CD8-positive, alpha-beta memory T cell (primary cell): ENCODE measurements at regions of chr19 and their contacts with region 1.

Region 1: GRCh38 chr19:48588670-48589399 is 17.7 kb upstream of the SPACA4 start:
- DNase-seq: peak; percentile 72 to 88 (median 80)
- H3K4me3 ChIP-seq: peak overlapping the region; percentile 52
- H3K4me3 Mint-ChIP-seq: peak overlapping the region; percentile 46 to 81 (median 65)
- H3K27ac ChIP-seq: no peak overlapping the region
- H3K27ac Mint-ChIP-seq: peak overlapping the region in 5 of 8 donors; percentile 11 to 78 (median 48)
- H3K4me1 ChIP-seq: peaks cover 6% of the 10 kb centered on the region
- H3K4me1 Mint-ChIP-seq: peaks cover 10 to 17% (median 15%) of the 10 kb centered on the region in 3 donors
- H3K27me3 ChIP-seq: no peaks in the 10 kb centered on the region
- H3K27me3 Mint-ChIP-seq: peaks cover 2 to 10% of the 10 kb centered on the region in 2 donors

Region 2: GRCh38 chr19:48303367-48303766 is 285.5 kb before region 1 on chr19:
- CTCF ChIA-PET with region 1: no interaction called
- POLR2A ChIA-PET with region 1: no interaction called
- DNase-seq: no peak
- H3K4me3 ChIP-seq: no peak overlapping the region
- H3K4me3 Mint-ChIP-seq: no peak overlapping the region
- H3K27ac ChIP-seq: no peak overlapping the region
- H3K27ac Mint-ChIP-seq: peak overlapping the region in 1 of 8 donors; percentile 14
- H3K4me1 ChIP-seq: no peaks in the 10 kb centered on the region
- H3K4me1 Mint-ChIP-seq: no peaks in the 10 kb centered on the region
- H3K27me3 ChIP-seq: no peaks in the 10 kb centered on the region
- H3K27me3 Mint-ChIP-seq: peaks cover 0 to 7% of the 10 kb centered on the region in 2 donors

Region 3: DNA sequence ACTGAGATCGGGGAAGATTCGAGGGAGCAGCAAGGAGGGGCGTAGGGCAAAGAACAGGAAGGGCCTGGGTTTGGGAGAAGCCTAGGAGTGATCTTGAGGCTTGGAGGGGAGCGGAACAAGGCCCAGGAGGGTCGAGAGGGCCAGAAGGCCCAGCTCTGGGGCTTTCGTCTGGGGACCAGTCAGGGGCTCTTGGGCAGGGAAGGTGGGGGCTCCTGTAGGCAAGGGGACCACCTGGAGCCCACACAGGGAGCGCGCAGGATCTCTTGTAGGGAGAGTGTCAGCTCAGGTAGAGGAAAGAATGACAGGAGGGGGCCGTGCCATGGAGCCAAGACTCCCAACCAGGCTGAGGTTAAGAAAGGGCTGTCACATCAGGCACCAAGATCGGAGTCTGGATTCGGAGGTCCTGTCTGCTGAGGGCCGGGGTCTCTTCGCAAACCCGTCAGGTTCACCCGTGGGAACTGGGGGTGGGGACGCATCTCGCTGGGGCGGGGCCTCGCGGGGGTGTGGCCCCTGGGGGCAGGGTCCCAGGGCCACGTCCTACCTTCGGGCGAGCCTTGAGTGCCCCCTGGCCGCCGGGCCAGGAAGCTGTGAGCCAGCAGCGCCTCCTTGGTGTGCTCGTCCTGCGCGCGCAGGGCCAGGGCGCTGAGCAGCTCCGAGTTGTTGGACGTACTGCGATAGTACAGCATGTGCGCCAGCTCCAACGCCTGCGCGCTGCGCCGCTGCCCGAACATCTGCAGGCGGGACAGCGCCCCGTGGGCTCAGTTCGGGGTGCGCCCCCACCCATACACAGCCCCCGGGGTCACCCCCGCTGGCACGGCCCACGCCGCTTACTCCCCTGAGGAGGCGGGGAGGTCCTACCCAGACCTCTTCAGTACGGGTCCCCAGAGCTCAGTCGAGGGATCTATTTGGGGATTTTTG is 255.1 kb before region 1 on chr19:
- CTCF ChIA-PET with region 1: interaction called, 11 read pairs
- POLR2A ChIA-PET with region 1: no interaction called
- DNase-seq: peak; percentile 89 to 95 (median 91)
- H3K4me3 ChIP-seq: peak overlapping the region; percentile 95
- H3K4me3 Mint-ChIP-seq: peak overlapping the region; percentile 88 to 99 (median 97)
- H3K27ac ChIP-seq: peak overlapping the region; percentile 88
- H3K27ac Mint-ChIP-seq: peak overlapping the region; percentile 93 to 98 (median 96)
- H3K4me1 ChIP-seq: peaks cover 43% of the 10 kb centered on the region
- H3K4me1 Mint-ChIP-seq: peaks cover 43 to 53% (median 49%) of the 10 kb centered on the region in 3 donors
- H3K27me3 ChIP-seq: no peaks in the 10 kb centered on the region
- H3K27me3 Mint-ChIP-seq: no peaks in the 10 kb centered on the region

Region 4: DNA sequence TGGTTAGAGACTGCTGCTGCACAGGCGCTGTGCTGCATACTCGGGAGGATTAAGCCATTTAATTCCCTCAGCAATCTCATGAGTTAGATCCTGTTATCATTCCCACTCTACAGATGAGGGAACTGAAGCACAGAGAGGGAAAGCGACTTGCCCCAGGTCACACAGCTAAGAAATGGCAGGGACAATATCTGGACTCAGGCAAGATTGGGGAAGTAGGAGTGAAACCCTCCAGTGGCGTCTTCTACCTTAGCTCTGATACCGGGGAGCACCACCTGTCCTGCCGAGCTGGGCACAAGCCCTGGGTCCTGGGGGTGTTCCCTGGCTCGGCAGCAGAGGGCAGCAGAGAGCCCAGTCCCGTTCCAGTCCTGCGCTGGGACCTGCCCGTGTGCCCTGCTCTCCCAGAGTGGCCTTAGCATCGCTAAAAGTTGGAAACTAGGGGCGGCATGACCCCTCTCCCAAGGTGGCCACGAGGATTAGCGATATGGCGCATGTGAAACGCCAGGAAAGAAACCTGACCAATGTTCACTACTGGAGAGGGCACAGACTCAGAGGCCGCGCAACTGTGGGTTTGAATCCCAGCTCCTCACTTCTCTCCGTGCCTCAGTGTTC is 99.1 kb before region 1 on chr19:
- CTCF ChIA-PET with region 1: interaction called, 37 read pairs
- POLR2A ChIA-PET with region 1: interaction called, 7 read pairs
- DNase-seq: peak; percentile 69 to 80 (median 75)
- H3K4me3 ChIP-seq: no peak overlapping the region
- H3K4me3 Mint-ChIP-seq: peak overlapping the region in 3 of 7 donors; percentile 15 to 40 (median 24)
- H3K27ac ChIP-seq: no peak overlapping the region
- H3K27ac Mint-ChIP-seq: peak overlapping the region in 1 of 8 donors; percentile 87
- H3K4me1 ChIP-seq: peaks cover 37% of the 10 kb centered on the region
- H3K4me1 Mint-ChIP-seq: peaks cover 20 to 39% (median 30%) of the 10 kb centered on the region in 3 donors
- H3K27me3 ChIP-seq: peaks cover 4% of the 10 kb centered on the region
- H3K27me3 Mint-ChIP-seq: peaks cover 17 to 19% of the 10 kb centered on the region in 2 donors

Region 5: DNA sequence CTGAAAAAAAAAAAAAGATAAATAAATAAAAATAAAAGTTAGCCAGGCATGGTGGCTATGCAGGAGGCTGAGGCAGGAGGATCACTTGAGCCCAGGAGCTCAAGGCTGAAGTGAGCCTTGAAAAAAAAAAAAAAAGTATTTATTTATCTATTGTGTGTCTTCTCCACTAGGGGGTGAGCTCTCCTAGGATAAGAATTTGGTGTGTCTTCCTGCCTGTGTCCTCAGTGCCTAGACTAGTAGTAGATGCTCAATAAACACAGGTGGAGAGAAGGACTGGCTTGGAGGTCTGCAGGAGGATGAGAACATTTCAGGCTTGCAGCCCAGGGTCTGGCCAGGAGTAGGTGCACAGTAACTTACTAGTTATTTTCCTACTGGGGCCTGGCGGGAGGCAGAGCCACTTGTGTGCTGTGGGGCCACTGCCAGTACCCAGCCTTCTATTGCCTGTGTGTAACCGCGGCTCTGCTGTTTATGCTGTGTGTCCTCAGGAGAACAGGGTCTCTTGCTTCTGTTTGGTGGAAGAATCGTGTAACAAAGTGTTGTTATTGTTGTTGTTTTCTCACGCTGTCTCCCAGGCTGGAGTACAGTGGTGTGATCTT is 82.6 kb before region 1 on chr19:
- CTCF ChIA-PET with region 1: interaction called, 152 read pairs
- POLR2A ChIA-PET with region 1: no interaction called
- DNase-seq: peak in 2 of 5 donors; percentile 60
- H3K4me3 ChIP-seq: no peak overlapping the region
- H3K4me3 Mint-ChIP-seq: peak overlapping the region in 2 of 7 donors; percentile 15 to 64
- H3K27ac ChIP-seq: no peak overlapping the region
- H3K27ac Mint-ChIP-seq: peak overlapping the region in 2 of 8 donors; percentile 26 to 63
- H3K4me1 ChIP-seq: peaks cover 14% of the 10 kb centered on the region
- H3K4me1 Mint-ChIP-seq: peaks cover 13 to 24% (median 14%) of the 10 kb centered on the region in 3 donors
- H3K27me3 ChIP-seq: no peaks in the 10 kb centered on the region
- H3K27me3 Mint-ChIP-seq: peaks cover 0 to 1% of the 10 kb centered on the region in 2 donors

Region 6: GRCh38 chr19:48608798-48609263 is 20.0 kb after region 1 on chr19:
- CTCF ChIA-PET with region 1: interaction called, 11 read pairs
- POLR2A ChIA-PET with region 1: no interaction called
- DNase-seq: peak in 2 of 5 donors; percentile 36 to 38
- H3K4me3 ChIP-seq: no peak overlapping the region
- H3K4me3 Mint-ChIP-seq: peak overlapping the region in 2 of 7 donors; percentile 44 to 48
- H3K27ac ChIP-seq: no peak overlapping the region
- H3K27ac Mint-ChIP-seq: peak overlapping the region in 5 of 8 donors; percentile 50 to 74 (median 51)
- H3K4me1 ChIP-seq: peaks cover 7% of the 10 kb centered on the region
- H3K4me1 Mint-ChIP-seq: peaks cover 4 to 6% (median 5%) of the 10 kb centered on the region in 3 donors
- H3K27me3 ChIP-seq: no peaks in the 10 kb centered on the region
- H3K27me3 Mint-ChIP-seq: no peaks in the 10 kb centered on the region